Common myeloid progenitor, CD34-positive (primary cell): ENCODE measurements at regions of chr2 and their contacts with region 1.

Region 1: GRCh38 chr2:38720613-38721241 is 30.4 kb downstream of the SRSF7 start:
- DNase-seq: peak in 2 of 3 donors; percentile 41 to 53
- H3K4me3 ChIP-seq: no peak overlapping the region
- H3K27ac ChIP-seq: no peak overlapping the region
- H3K4me1 ChIP-seq: peaks cover 7 to 24% (median 16%) of the 10 kb centered on the region in 4 experiments
- H3K27me3 ChIP-seq: no peaks in the 10 kb centered on the region

Region 2: GRCh38 chr2:38581193-38582147 is 139.3 kb before region 1 on chr2:
- CTCF ChIA-PET with region 1: interaction called, 203 read pairs
- POLR2A ChIA-PET with region 1: no interaction called
- DNase-seq: peak; percentile 79 to 91 (median 85)
- H3K4me3 ChIP-seq: no peak overlapping the region
- H3K27ac ChIP-seq: no peak overlapping the region
- H3K4me1 ChIP-seq: peaks cover 0 to 3% (median 0%) of the 10 kb centered on the region in 4 experiments
- H3K27me3 ChIP-seq: no peaks in the 10 kb centered on the region

Region 3: GRCh38 chr2:38596229-38596628 is 124.5 kb before region 1 on chr2:
- CTCF ChIA-PET with region 1: interaction called, 80 read pairs
- POLR2A ChIA-PET with region 1: no interaction called
- DNase-seq: no peak
- H3K4me3 ChIP-seq: no peak overlapping the region
- H3K27ac ChIP-seq: no peak overlapping the region
- H3K4me1 ChIP-seq: peaks cover 4 to 12% (median 5%) of the 10 kb centered on the region in 4 experiments
- H3K27me3 ChIP-seq: no peaks in the 10 kb centered on the region